Stomach (tissue), 19 donors: ENCODE measurements at regions of chr22 and their contacts with region 1.

Region 1: GRCh38 chr22:45271667-45272201 is 13.0 kb upstream of the UPK3A start:
- DNase-seq: peak; percentile 31 to 80
- H3K4me3 ChIP-seq: no peak overlapping the region
- H3K27ac ChIP-seq: peak overlapping the region; percentile 59 to 80 (median 65)
- H3K4me1 ChIP-seq: peaks cover 5 to 53% (median 33%) of the 10 kb centered on the region in 4 donors
- H3K27me3 ChIP-seq: peaks cover 0 to 14% (median 0%) of the 10 kb centered on the region in 3 donors
- CTCF ChIP-seq: no peak
- EP300 ChIP-seq: no peak
- POLR2A ChIP-seq: no peak

Region 2: GRCh38 chr22:44956840-44957767 is 314.6 kb before region 1 on chr22:
- intact Hi-C with region 1: no loop called
- DNase-seq: no peak
- H3K4me3 ChIP-seq: no peak overlapping the region
- H3K27ac ChIP-seq: no peak overlapping the region
- H3K4me1 ChIP-seq: no peaks in the 10 kb centered on the region
- H3K27me3 ChIP-seq: peaks cover 0 to 53% (median 9%) of the 10 kb centered on the region in 3 donors
- CTCF ChIP-seq: no peak
- EP300 ChIP-seq: no peak
- POLR2A ChIP-seq: no peak

Region 3: DNA sequence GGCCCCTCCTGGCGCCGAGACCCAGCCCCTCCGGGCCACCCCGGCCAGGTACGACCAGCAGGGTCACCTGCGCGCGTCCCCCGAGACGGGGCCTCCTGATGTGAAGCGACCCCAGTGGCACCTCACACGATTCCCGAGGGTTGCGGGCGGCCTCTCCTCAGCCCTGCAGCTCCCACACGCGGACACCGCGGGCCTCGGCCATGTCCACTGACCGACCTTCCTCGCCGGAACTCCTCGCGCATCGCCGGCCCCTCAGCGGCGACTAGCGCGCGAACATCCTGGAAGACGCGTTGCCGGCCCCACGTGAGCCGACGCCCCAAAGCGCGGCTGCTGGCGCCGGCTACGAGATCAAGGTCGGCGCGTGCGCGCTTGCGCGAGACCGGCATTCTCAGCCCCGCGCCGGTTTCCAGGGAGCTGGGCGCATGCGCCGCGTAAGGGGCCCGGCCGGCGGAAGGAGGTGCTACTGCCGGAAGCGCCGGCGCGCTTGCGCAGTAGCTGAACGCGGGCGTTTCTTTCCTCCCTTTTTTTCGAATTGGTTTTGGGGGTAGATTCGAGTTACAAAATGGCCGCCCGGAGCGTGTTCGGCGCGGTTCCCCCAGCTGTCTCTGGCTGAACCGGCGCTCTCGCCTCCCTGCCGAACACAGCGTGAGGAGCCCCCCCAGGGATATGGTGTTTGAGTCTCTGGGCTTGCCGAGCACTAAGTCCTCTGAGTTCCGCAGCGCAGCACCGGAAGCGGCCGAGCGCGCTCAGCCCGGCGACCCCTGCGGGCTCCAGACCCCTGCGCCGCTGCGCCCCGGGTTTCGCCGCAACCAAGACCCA is 108.1 kb before region 1 on chr22 and contains the start of gene NUP50:
- intact Hi-C with region 1: no loop called
- DNase-seq: peak; percentile 98 to 99
- H3K4me3 ChIP-seq: peak within 1 kb of the TSS; percentile 77 to 99 (median 83)
- H3K27ac ChIP-seq: peak within 1 kb of the TSS; percentile 90 to 96 (median 95)
- H3K4me1 ChIP-seq: peaks cover 28 to 86% (median 64%) of the 10 kb centered on the region in 4 donors
- H3K27me3 ChIP-seq: no peaks in the 10 kb centered on the region
- CTCF ChIP-seq: no peak
- EP300 ChIP-seq: no peak
- POLR2A ChIP-seq: peak in 1 of 4 donors; percentile 62
- total RNA-seq, gene NUP50: 69.9 to 443 (median 162) TPM

Region 4: GRCh38 chr22:45185718-45186514 is 85.8 kb before region 1 on chr22:
- intact Hi-C with region 1: no loop called
- DNase-seq: no peak
- H3K4me3 ChIP-seq: no peak overlapping the region
- H3K27ac ChIP-seq: no peak overlapping the region
- H3K4me1 ChIP-seq: peaks cover 0 to 7% (median 2%) of the 10 kb centered on the region in 4 donors
- H3K27me3 ChIP-seq: no peaks in the 10 kb centered on the region
- CTCF ChIP-seq: no peak
- EP300 ChIP-seq: no peak
- POLR2A ChIP-seq: no peak

Region 5: DNA sequence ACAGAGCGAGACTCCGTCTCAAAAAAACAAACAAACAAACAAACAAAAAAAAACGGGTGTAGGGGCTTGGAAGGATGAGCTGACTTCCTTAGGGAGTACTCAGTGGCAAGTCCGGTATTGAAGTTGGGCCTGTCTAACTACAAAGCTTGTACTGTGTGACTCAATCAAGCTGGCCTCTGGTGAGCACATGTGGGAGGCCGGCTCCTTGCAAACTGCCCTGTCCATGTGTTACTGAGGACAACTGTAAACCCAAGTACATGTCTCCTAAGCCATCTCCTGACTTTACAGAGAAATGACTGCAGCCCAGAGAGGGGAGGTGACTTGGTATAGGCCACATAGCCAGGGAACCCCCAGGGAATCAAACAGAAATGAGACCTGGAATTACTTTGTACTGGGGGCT is 153.4 kb after region 1 on chr22:
- intact Hi-C with region 1: loop called (anchors 5 kb)
- DNase-seq: no peak
- H3K4me3 ChIP-seq: no peak overlapping the region
- H3K27ac ChIP-seq: no peak overlapping the region
- H3K4me1 ChIP-seq: no peaks in the 10 kb centered on the region
- H3K27me3 ChIP-seq: no peaks in the 10 kb centered on the region
- CTCF ChIP-seq: no peak
- EP300 ChIP-seq: no peak
- POLR2A ChIP-seq: no peak